ENCODE measurements at regions of chr2 and their contacts with region 1.

Region 1: DNA sequence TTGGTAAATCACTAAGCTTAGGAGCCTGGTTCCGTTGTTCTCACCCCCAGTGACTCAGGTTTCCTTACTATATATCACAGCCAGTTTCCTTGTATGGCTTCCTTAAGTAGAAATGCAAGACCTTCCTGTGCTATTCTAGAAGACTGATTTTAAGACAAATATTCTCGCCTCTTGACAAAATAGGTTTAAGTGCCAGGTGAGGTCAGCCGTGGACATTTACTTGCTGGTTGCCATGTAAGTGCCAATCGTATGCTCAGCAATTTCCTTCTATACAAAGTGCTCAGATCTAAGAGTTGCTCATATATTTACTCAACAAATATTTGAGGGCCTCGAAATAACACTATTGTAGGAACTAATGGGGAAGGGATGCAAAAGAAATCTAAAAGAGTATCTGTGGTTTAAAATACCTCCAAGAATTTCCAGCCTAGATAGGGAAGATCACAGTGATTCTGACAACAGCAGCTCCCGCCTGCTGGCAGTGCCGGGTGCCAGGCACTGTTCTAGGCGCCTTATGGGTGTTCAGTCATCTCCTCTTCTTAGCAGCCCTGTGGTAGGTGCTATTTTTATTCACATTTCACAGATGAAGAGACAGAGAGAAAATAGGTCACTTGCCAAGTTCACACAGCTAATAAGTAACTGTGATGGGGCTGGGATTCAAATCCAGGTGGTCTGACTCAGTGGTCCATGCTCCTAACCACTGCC is 95.3 kb upstream of the B3GNT7 start:
- DNase-seq: no peak
- H3K4me3 ChIP-seq: no peak overlapping the region
- CTCF ChIP-seq: no peak

Region 2: GRCh38 chr2:231250161-231250560 is 50.0 kb before region 1 on chr2:
- in situ Hi-C with region 1: no loop called
- DNase-seq: no peak
- H3K4me3 ChIP-seq: no peak overlapping the region
- CTCF ChIP-seq: no peak

Region 3: GRCh38 chr2:231393149-231394131 is 93.3 kb after region 1 on chr2:
- in situ Hi-C with region 1: no loop called
- DNase-seq: no peak
- H3K4me3 ChIP-seq: no peak overlapping the region
- CTCF ChIP-seq: no peak

Region 4: GRCh38 chr2:231455222-231455621 is 155.1 kb after region 1 on chr2:
- in situ Hi-C with region 1: loop called (anchors 5 kb)
- DNase-seq: no peak
- H3K4me3 ChIP-seq: no peak overlapping the region
- CTCF ChIP-seq: no peak

Measured in astrocyte of the cerebellum (primary cell).